CD4-positive, alpha-beta T cell (primary cell): ENCODE measurements at regions of chr11 and their contacts with region 1.

Region 1: DNA sequence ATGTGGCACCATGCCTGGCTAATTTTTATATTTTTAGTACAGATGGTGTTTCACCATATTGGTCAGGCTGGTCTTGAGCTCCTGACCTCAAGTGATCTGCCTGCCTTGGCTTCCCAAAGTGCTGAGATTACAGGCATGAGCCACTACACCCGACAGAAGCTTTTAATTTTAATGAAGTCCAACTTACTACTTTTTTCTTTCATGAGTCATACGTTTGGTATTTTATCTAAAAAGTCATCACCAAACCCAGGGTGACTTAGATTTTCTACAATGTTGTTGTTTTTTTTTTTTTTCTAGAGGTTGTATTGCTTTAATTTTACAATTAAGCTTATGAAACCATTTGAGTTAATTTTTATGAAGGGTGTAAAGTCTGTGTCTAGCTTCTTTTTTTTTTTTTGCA is 34.9 kb downstream of the JRKL start:
- DNase-seq: no peak
- ATAC-seq: no peak
- H3K4me3 ChIP-seq: no peak overlapping the region
- H3K4me3 Mint-ChIP-seq: no peak overlapping the region
- H3K27ac ChIP-seq: no peak overlapping the region
- H3K27ac Mint-ChIP-seq: no peak overlapping the region
- H3K4me1 ChIP-seq: no peaks in the 10 kb centered on the region
- H3K4me1 Mint-ChIP-seq: no peaks in the 10 kb centered on the region
- H3K27me3 ChIP-seq: peaks cover 0 to 22% of the 10 kb centered on the region in 2 experiments
- H3K27me3 Mint-ChIP-seq: peaks cover 34% of the 10 kb centered on the region
- CTCF ChIP-seq: no peak

Region 2: DNA sequence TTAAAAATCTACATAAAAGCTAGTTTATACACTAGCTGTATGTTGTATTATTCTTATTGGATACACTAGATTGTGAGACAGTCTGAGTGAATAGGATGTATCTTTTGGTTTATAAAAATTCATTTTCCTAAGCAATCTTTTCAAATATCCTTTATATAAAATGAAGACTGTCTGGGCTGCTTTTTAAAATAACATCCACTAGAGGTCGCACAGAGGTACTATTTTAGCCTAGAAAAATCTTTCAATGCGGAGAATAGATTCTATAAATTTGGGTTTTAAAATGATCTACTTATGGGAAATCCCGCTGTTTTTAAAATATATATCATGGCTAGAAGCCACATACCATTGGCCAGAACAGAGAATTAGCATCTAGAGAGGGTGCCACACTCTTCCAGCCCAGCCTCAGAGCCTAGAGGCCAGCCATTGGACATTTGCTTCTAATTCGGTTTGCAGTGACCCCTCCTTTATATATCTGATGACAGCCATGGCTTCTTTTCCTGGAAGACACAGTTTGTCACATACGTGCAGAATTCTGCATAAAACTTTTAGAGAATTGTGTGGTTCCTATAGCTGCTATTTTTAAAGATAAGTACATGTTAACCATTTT is 1905.1 kb before region 1 on chr11:
- CTCF ChIA-PET with region 1: no interaction called
- POLR2A ChIA-PET with region 1: no interaction called
- intact Hi-C with region 1: loop called (anchors 2 to 5 kb)
- DNase-seq: peak in 4 of 14 experiments; percentile 24 to 61 (median 50)
- ATAC-seq: peak; percentile 44
- H3K4me3 ChIP-seq: no peak overlapping the region
- H3K4me3 Mint-ChIP-seq: no peak overlapping the region
- H3K27ac ChIP-seq: no peak overlapping the region
- H3K27ac Mint-ChIP-seq: no peak overlapping the region
- H3K4me1 ChIP-seq: no peaks in the 10 kb centered on the region
- H3K4me1 Mint-ChIP-seq: no peaks in the 10 kb centered on the region
- H3K27me3 ChIP-seq: peaks cover 3 to 8% of the 10 kb centered on the region in 2 experiments
- H3K27me3 Mint-ChIP-seq: peaks cover 31% of the 10 kb centered on the region
- CTCF ChIP-seq: peak; percentile 86

Region 3: DNA sequence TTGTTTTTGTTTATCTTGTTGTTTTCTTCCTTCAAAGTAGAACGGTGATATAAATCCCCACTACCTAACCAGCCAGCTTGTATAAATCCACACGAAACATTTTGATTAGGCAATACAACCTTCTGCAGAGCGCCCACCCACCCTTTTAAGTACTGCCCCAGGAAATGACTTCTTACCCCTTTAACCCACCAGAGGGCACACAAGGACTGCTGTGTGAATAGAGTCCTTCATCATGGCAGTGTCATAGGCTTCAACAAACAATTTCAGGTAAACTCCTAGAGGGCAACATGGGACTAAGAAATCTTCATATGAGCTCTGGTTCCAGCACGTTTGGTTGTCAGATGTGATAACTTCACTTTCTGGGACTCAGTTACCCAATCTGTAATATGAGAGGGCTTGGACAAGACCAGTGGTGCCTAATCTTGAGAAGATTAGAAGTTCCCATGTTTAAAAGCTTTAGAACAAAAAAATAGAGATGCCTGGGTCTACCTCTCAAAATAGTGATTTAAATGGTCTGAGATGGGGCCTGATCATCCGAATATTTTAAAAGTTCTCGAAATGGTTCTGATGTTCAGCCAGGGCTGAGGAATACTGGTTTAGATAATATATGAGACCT is 1801.5 kb before region 1 on chr11:
- CTCF ChIA-PET with region 1: no interaction called
- POLR2A ChIA-PET with region 1: no interaction called
- intact Hi-C with region 1: loop called (anchors 5 kb)
- DNase-seq: peak in 13 of 14 experiments; percentile 5 to 71 (median 19)
- ATAC-seq: peak; percentile 91
- H3K4me3 ChIP-seq: no peak overlapping the region
- H3K4me3 Mint-ChIP-seq: no peak overlapping the region
- H3K27ac ChIP-seq: no peak overlapping the region
- H3K27ac Mint-ChIP-seq: no peak overlapping the region
- H3K4me1 ChIP-seq: no peaks in the 10 kb centered on the region
- H3K4me1 Mint-ChIP-seq: no peaks in the 10 kb centered on the region
- H3K27me3 ChIP-seq: no peaks in the 10 kb centered on the region
- H3K27me3 Mint-ChIP-seq: peaks cover 11% of the 10 kb centered on the region
- CTCF ChIP-seq: peak; percentile 48

Region 4: GRCh38 chr11:94786264-94787126 is 1638.2 kb before region 1 on chr11:
- CTCF ChIA-PET with region 1: no interaction called
- POLR2A ChIA-PET with region 1: no interaction called
- intact Hi-C with region 1: loop called (anchors 2 to 10 kb)
- DNase-seq: peak in 3 of 14 experiments; percentile 24 to 42 (median 36)
- ATAC-seq: peak; percentile 57
- H3K4me3 ChIP-seq: no peak overlapping the region
- H3K4me3 Mint-ChIP-seq: no peak overlapping the region
- H3K27ac ChIP-seq: no peak overlapping the region
- H3K27ac Mint-ChIP-seq: no peak overlapping the region
- H3K4me1 ChIP-seq: no peaks in the 10 kb centered on the region
- H3K4me1 Mint-ChIP-seq: no peaks in the 10 kb centered on the region
- H3K27me3 ChIP-seq: peaks cover 0 to 12% of the 10 kb centered on the region in 2 experiments
- H3K27me3 Mint-ChIP-seq: peaks cover 11% of the 10 kb centered on the region
- CTCF ChIP-seq: peak; percentile 60

Region 5: DNA sequence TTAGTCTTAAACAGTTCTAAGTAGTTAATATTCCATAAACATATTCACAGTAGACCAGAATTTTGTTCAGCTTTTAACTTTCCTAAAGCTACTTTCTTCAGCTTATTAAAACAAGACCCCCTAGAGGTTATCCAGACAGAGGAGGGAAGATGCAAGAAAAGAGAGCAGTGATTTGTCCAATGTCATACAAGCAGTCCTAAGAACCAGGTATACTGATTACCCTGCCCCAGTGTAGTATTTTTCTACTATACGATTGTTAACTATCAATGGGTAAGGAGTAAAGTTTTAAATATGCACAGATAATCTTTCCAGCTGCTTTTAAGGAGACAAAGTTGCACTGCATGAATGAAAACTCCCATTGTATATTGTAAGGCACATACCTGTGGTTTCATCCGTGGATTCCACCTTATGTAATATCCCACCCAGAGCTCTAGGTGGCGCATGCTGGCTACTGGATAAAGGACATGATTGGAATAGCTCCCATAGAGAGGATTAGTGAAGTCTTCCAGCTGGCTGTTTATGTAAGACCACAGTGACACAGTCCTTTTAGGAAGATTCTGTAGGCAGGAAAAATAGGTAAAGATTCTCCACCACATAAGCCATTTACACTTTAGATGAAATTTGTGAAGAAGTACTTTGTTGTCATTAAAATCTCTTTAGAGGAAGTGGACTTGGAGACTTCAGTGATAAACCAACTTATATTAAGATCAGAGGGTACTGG is 588.8 kb before region 1 on chr11:
- CTCF ChIA-PET with region 1: interaction called, 17 read pairs
- POLR2A ChIA-PET with region 1: no interaction called
- intact Hi-C with region 1: loop called (anchors 1 kb)
- DNase-seq: peak; percentile 23 to 75 (median 40)
- ATAC-seq: peak; percentile 99
- H3K4me3 ChIP-seq: no peak overlapping the region
- H3K4me3 Mint-ChIP-seq: no peak overlapping the region
- H3K27ac ChIP-seq: no peak overlapping the region
- H3K27ac Mint-ChIP-seq: no peak overlapping the region
- H3K4me1 ChIP-seq: no peaks in the 10 kb centered on the region
- H3K4me1 Mint-ChIP-seq: no peaks in the 10 kb centered on the region
- H3K27me3 ChIP-seq: no peaks in the 10 kb centered on the region
- H3K27me3 Mint-ChIP-seq: no peaks in the 10 kb centered on the region
- CTCF ChIP-seq: peak; percentile 94